ENCODE measurements at regions of chr14 and their contacts with region 1.

Region 1: GRCh38 chr14:73058224-73058921 is at the start of gene RBM25:
- DNase-seq: peak; percentile 86 to 97 (median 94)
- ATAC-seq: peak; percentile 91 to 94
- H3K4me3 Mint-ChIP-seq: no peak within 1 kb of the TSS
- H3K27ac Mint-ChIP-seq: no peak within 1 kb of the TSS
- H3K4me1 Mint-ChIP-seq: peaks cover 13 to 51% (median 36%) of the 10 kb centered on the region in 4 donors
- H3K27me3 Mint-ChIP-seq: no peaks in the 10 kb centered on the region
- polyA plus RNA-seq, gene RBM25: 40.7 to 64.8 (median 42.6) TPM

Region 2: GRCh38 chr14:73026845-73027542 is 31.4 kb before region 1 on chr14 and contains the start of gene ZFYVE1:
- POLR2A ChIA-PET with region 1: interaction called, 62 read pairs
- DNase-seq: peak; percentile 75 to 93 (median 86)
- ATAC-seq: peak; percentile 98 to 99
- H3K4me3 Mint-ChIP-seq: peak within 1 kb of the TSS; percentile 90 to 99 (median 97)
- H3K27ac Mint-ChIP-seq: peak within 1 kb of the TSS; percentile 67 to 98 (median 92)
- H3K4me1 Mint-ChIP-seq: peaks cover 26 to 49% (median 45%) of the 10 kb centered on the region in 4 donors
- H3K27me3 Mint-ChIP-seq: no peaks in the 10 kb centered on the region
- polyA plus RNA-seq, gene ZFYVE1: 4.1 to 6.4 (median 4.5) TPM

Region 3: DNA sequence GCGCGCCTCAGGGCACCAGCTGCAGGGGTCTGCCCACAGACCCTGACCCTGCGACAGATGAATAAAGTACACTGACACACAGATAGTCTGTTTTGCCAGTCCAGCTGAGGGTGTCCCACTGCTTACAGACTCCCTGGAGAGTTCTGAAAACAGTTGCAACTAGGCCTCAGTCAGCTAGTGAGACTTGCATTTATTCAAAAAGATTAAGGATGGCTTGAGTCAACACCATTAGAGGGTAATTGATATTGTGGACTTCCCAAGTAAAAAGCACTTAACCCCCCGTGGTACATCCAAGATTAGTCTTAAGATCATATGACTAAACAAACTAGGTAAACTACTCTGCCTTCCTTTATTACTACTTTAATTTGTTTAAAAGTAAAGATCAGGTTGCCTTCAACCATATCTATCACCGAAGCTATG is 66.8 kb after region 1 on chr14:
- POLR2A ChIA-PET with region 1: no interaction called
- DNase-seq: no peak
- ATAC-seq: no peak
- H3K4me3 Mint-ChIP-seq: no peak overlapping the region
- H3K27ac Mint-ChIP-seq: peak overlapping the region in 6 of 10 donors; percentile 14 to 67 (median 42)
- H3K4me1 Mint-ChIP-seq: peaks cover 0 to 5% (median 1%) of the 10 kb centered on the region in 4 donors
- H3K27me3 Mint-ChIP-seq: no peaks in the 10 kb centered on the region

Region 4: DNA sequence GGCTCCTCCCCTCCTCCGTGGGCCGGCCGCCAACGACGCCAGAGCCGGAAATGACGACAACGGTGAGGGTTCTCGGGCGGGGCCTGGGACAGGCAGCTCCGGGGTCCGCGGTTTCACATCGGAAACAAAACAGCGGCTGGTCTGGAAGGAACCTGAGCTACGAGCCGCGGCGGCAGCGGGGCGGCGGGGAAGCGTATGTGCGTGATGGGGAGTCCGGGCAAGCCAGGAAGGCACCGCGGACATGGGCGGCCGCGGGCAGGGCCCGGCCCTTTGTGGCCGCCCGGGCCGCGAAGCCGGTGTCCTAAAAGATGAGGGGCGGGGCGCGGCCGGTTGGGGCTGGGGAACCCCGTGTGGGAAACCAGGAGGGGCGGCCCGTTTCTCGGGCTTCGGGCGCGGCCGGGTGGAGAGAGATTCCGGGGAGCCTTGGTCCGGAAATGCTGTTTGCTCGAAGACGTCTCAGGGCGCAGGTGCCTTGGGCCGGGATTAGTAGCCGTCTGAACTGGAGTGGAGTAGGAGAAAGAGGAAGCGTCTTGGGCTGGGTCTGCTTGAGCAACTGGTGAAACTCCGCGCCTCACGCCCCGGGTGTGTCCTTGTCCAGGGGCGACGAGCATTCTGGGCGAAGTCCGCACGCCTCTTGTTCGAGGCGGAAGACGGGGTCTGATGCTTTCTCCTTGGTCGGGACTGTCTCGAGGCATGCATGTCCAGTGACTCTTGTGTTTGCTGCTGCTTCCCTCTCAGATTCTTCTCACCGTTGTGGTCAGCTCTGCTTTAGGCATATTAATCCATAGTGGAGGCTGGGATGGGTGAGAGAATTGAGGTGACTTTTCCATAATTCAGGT is 78.2 kb after region 1 on chr14 and contains the start of gene PSEN1:
- POLR2A ChIA-PET with region 1: interaction called, 34 read pairs
- DNase-seq: peak; percentile 98 to 100 (median 99)
- ATAC-seq: peak; percentile 91
- H3K4me3 Mint-ChIP-seq: peak within 1 kb of the TSS; percentile 93 to 99 (median 98)
- H3K27ac Mint-ChIP-seq: peak within 1 kb of the TSS; percentile 94 to 100 (median 98)
- H3K4me1 Mint-ChIP-seq: peaks cover 19 to 35% (median 31%) of the 10 kb centered on the region in 4 donors
- H3K27me3 Mint-ChIP-seq: no peaks in the 10 kb centered on the region
- polyA plus RNA-seq, gene PSEN1: 14.7 to 26.1 (median 20.6) TPM